WTC11 (cell line): ENCODE measurements at regions of chr20 and their contacts with region 1.

Region 1: GRCh38 chr20:52975029-52975732 is 3.0 kb downstream of the TSHZ2 start:
- DNase-seq: no peak
- ATAC-seq: no peak
- H3K4me3 Mint-ChIP-seq: no peak overlapping the region
- H3K27ac Mint-ChIP-seq: no peak overlapping the region
- H3K4me1 Mint-ChIP-seq: peaks cover 16% of the 10 kb centered on the region
- H3K27me3 Mint-ChIP-seq: peaks cover 27% of the 10 kb centered on the region
- CTCF ChIP-seq: no peak

Region 2: DNA sequence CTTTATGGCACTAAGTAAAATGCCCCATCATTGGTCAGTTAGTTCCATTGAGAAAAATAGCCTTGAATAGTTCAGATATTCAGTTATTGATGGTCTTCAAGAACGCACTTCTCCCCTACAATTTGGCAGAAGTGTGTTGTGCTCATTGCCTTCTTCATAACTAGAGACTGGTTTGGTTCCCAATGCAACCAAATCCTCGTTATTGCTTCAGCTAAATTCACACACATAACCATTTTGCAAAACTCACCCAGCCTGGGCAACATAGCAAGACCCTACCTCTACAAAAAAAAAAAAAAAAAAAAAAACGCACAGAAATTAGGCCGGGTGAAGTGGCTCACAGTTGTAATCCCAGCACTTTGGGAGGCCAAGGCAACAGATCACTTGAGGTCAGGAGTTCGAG is 586.3 kb after region 1 on chr20:
- CTCF ChIA-PET with region 1: no interaction called
- POLR2A ChIA-PET with region 1: interaction called, 10 read pairs
- DNase-seq: no peak
- ATAC-seq: no peak
- H3K4me3 Mint-ChIP-seq: no peak overlapping the region
- H3K27ac Mint-ChIP-seq: no peak overlapping the region
- H3K4me1 Mint-ChIP-seq: peaks cover 8% of the 10 kb centered on the region
- H3K27me3 Mint-ChIP-seq: no peaks in the 10 kb centered on the region
- CTCF ChIP-seq: no peak